ENCODE measurements at regions of chr4 and their contacts with region 1.

Region 1: GRCh38 chr4:47668810-47669408 is 169.0 kb downstream of the CORIN start:
- DNase-seq: no peak
- ATAC-seq: peak in 1 of 4 donors; percentile 56
- H3K4me3 ChIP-seq: no peak overlapping the region
- H3K27ac ChIP-seq: no peak overlapping the region
- H3K4me1 ChIP-seq: no peaks in the 10 kb centered on the region
- H3K27me3 ChIP-seq: peaks cover 0 to 10% (median 3%) of the 10 kb centered on the region in 3 donors
- CTCF ChIP-seq: peak; percentile 58

Region 2: DNA sequence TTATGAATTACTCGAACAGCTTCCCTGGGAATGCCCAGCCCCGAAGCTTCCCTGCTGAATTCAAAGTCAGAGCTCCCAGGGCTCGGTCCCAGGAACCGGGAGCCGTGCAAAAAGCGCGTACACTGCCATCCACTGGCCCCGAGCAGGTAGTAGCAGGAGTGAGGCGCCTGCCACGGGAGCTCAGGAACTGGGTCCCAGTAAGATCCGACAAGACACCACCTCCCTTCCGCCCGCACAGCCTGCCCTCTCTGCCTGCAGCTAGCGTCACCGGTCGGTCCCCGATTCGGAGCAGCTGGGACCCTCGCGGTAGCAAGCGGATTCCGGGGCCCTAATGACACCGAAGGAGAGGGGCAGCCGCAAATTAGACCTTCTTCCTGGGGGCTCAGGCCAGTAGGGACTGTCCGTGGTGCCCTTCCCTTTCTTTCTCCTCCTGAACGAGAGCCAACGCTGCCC is 167.8 kb after region 1 on chr4:
- intact Hi-C with region 1: loop called in 1 of 2 experiments (anchors 5 kb)
- DNase-seq: peak; percentile 59 to 76
- ATAC-seq: peak; percentile 93 to 97 (median 94)
- H3K4me3 ChIP-seq: peak overlapping the region; percentile 65
- H3K27ac ChIP-seq: no peak overlapping the region
- H3K4me1 ChIP-seq: peaks cover 15% of the 10 kb centered on the region
- H3K27me3 ChIP-seq: peaks cover 0 to 26% (median 6%) of the 10 kb centered on the region in 3 donors
- CTCF ChIP-seq: peak; percentile 70

Region 3: GRCh38 chr4:47933840-47934239 is 264.9 kb after region 1 on chr4:
- intact Hi-C with region 1: loop called in 1 of 2 experiments (anchors 10 kb)
- DNase-seq: no peak
- ATAC-seq: no peak
- H3K4me3 ChIP-seq: no peak overlapping the region
- H3K27ac ChIP-seq: no peak overlapping the region
- H3K4me1 ChIP-seq: no peaks in the 10 kb centered on the region
- H3K27me3 ChIP-seq: peaks cover 0 to 5% (median 3%) of the 10 kb centered on the region in 3 donors
- CTCF ChIP-seq: peak; percentile 64

Region 4: DNA sequence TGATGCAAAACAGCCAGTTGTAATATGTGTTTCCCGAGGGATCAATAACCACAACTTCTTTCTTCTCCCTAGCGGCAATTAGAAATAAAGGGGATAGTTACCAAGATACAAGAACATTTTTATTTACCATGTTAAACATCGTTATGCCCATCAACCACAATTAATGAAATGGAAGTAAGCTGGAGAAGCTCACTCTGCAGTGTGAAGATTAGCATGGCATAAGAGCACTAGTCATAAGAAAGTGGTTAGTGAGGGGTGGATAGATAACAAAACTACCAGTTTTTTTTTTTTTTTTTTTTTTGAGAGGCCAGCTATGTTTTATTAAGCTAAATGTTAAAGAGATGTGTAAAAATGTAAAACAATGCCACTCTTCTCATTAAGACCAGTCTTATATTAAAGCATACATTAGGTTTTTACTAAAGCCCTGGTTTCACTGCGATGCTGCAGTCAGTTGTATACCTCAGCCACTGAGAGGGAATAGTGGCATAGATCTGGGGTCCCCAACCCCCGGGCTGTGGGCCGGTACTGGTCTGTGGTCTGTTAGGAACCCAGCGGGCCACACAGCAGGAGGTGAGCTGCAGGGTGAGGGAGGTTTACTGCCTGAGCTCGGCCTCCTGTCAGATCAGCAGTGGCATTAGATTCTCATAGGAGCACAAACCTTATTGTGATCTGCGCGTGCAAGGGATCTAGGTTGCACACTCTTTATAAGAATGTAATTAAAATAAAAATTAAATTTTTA is 273.3 kb after region 1 on chr4:
- intact Hi-C with region 1: loop called (anchors 5 to 10 kb)
- DNase-seq: no peak
- ATAC-seq: no peak
- H3K4me3 ChIP-seq: no peak overlapping the region
- H3K27ac ChIP-seq: no peak overlapping the region
- H3K4me1 ChIP-seq: no peaks in the 10 kb centered on the region
- H3K27me3 ChIP-seq: no peaks in the 10 kb centered on the region
- CTCF ChIP-seq: no peak